Activated CD4-positive, alpha-beta T cell treated with anti-CD3 and anti-CD28 coated beads, Interleukin-2, amount 10 ng/mL, durations not matched to agents 24 days and 14 days (primary cell): ENCODE measurements at regions of chr1 and their contacts with region 1.

Region 1: GRCh38 chr1:169624122-169624521 is 5.8 kb downstream of the SELP start:
- DNase-seq: no peak
- H3K4me3 Mint-ChIP-seq: no peak overlapping the region
- H3K27ac Mint-ChIP-seq: no peak overlapping the region
- H3K4me1 Mint-ChIP-seq: peaks cover 26% of the 10 kb centered on the region
- H3K27me3 Mint-ChIP-seq: no peaks in the 10 kb centered on the region

Region 2: DNA sequence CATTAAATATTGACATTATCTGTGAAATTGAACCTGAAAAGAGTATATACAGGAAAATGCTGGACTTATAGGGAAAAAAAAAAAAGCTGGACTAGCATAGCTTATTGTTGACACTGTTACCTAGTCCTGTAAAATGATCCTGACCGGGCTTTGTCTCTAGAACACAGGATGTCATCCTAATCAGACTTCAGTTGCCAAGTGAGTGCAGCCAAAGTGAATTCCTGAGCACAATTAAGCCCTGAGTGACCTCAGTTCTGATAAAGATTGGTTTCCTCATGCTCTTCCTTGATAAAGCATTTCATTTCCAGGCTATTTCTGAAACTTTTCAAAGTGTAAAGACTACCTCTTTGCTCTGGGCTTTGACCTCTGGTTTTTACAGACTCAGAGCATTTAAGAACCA is 14.0 kb before region 1 on chr1:
- intact Hi-C with region 1: no loop called
- DNase-seq: no peak
- H3K4me3 Mint-ChIP-seq: no peak overlapping the region
- H3K27ac Mint-ChIP-seq: no peak overlapping the region
- H3K4me1 Mint-ChIP-seq: peaks cover 10% of the 10 kb centered on the region
- H3K27me3 Mint-ChIP-seq: no peaks in the 10 kb centered on the region

Region 3: DNA sequence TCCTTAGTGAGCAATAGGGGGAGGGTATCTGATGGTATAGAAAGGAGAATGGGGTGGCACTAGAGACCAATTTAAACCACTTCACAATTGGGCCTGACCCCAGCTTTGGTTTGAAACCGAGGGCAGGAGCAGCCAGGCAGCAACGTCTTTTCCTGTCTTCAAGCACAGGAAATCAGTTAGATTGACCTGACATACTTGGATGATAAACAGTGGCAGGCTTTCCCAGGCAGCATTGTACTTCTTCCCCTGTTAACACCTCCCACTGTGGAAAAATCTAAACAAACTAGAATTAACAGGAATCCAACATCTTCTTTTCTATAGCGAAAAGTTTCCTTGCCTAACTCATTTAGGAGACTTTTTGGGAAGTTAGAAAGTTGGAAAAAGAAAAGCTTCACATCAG is 46.7 kb after region 1 on chr1:
- intact Hi-C with region 1: loop called (anchors 5 kb)
- DNase-seq: peak; percentile 55
- H3K4me3 Mint-ChIP-seq: no peak overlapping the region
- H3K27ac Mint-ChIP-seq: peak overlapping the region; percentile 57
- H3K4me1 Mint-ChIP-seq: peaks cover 34% of the 10 kb centered on the region
- H3K27me3 Mint-ChIP-seq: no peaks in the 10 kb centered on the region

Region 4: GRCh38 chr1:170247751-170248521 is 623.8 kb after region 1 on chr1:
- intact Hi-C with region 1: no loop called
- DNase-seq: no peak
- H3K4me3 Mint-ChIP-seq: no peak overlapping the region
- H3K27ac Mint-ChIP-seq: no peak overlapping the region
- H3K4me1 Mint-ChIP-seq: peaks cover 9% of the 10 kb centered on the region
- H3K27me3 Mint-ChIP-seq: peaks cover 5% of the 10 kb centered on the region

Region 5: DNA sequence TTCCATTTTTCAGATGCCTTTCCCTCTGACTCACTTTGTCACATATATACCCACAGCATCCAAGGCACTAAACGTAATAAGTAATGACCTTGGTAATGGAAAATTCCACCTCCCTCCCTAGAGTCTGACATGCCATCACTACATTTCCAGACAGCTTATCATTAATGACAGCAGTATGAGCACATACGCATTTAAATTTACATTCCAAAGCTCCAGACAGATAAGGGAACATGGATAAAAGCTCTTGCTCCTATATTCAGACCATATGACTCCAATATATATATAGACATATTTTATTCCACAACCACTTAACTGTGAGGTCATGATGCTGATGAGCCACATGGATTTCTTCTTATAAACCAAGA is 716.2 kb after region 1 on chr1:
- intact Hi-C with region 1: no loop called
- DNase-seq: no peak
- H3K4me3 Mint-ChIP-seq: no peak overlapping the region
- H3K27ac Mint-ChIP-seq: no peak overlapping the region
- H3K4me1 Mint-ChIP-seq: no peaks in the 10 kb centered on the region
- H3K27me3 Mint-ChIP-seq: peaks cover 3% of the 10 kb centered on the region